HepG2 (cell line): ENCODE measurements at regions of chr18 and their contacts with region 1.

Region 1: DNA sequence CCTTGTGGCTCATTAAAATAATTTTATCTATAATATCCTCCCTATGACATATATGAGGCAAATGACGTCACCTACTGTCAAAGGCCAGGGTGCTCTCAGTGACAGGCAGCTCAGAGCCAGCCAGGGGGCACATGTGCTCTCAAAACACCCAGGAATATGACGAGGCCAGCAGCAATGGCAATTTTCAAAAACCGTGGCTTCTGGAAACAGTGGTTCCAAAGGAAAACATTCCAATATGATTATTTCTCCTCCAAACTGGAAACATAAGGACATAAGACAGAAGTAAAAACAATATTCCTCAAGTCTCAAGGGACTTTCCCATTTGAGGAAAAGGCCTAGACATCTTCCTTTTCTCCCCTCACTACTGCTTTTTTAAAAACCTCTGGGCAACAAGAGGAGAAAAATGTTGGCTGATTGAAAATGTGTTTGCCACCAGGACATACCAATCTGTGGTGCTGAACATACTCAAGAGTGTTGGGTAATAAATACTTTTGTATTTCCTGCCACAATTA is 40.8 kb downstream of the RNF152 start:
- DNase-seq: no peak
- ATAC-seq: no peak
- H3K4me3 ChIP-seq: no peak overlapping the region
- H3K27ac ChIP-seq: no peak overlapping the region
- H3K4me1 ChIP-seq: no peaks in the 10 kb centered on the region
- H3K27me3 ChIP-seq: no peaks in the 10 kb centered on the region
- CTCF ChIP-seq: no peak
- EP300 ChIP-seq: no peak
- POLR2A ChIP-seq: no peak
- RAD21 ChIP-seq: no peak

Region 2: GRCh38 chr18:61876899-61877298 is 24.9 kb after region 1 on chr18:
- CTCF ChIA-PET with region 1: no interaction called
- POLR2A ChIA-PET with region 1: no interaction called
- in situ Hi-C with region 1: no loop called
- intact Hi-C with region 1: loop called (anchors 2 kb)
- DNase-seq: peak; percentile 44
- ATAC-seq: peak; percentile 69
- H3K4me3 ChIP-seq: no peak overlapping the region
- H3K27ac ChIP-seq: no peak overlapping the region
- H3K4me1 ChIP-seq: peaks cover 11% of the 10 kb centered on the region; the same call in 1 of the 2 replicates
- H3K27me3 ChIP-seq: no peaks in the 10 kb centered on the region; a peak in 1 of 5 replicates
- CTCF ChIP-seq: no peak
- EP300 ChIP-seq: no peak
- POLR2A ChIP-seq: no peak
- RAD21 ChIP-seq: no peak